ENCODE measurements at regions of chr2 and their contacts with region 1.

Region 1: GRCh38 chr2:102473020-102473419 is at the start of gene SLC9A4:
- DNase-seq: peak in 1 of 3 donors; percentile 83
- ATAC-seq: peak; percentile 79
- H3K4me3 ChIP-seq: no peak within 1 kb of the TSS
- H3K4me1 ChIP-seq: no peaks in the 10 kb centered on the region
- CTCF ChIP-seq: peak; percentile 78
- total RNA-seq, gene SLC9A4: 0.17 to 0.32 TPM in 2 of 3 donors, not detected in the other

Region 2: GRCh38 chr2:102592597-102592996 is 119.6 kb after region 1 on chr2:
- intact Hi-C with region 1: loop called in 1 of 2 experiments (anchors 5 kb)
- DNase-seq: peak in 1 of 3 donors; percentile 91
- ATAC-seq: peak; percentile 83
- H3K4me3 ChIP-seq: no peak overlapping the region
- H3K4me1 ChIP-seq: peaks cover 24% of the 10 kb centered on the region
- CTCF ChIP-seq: peak; percentile 47

Region 3: GRCh38 chr2:102615622-102616436 is 142.8 kb after region 1 on chr2:
- intact Hi-C with region 1: loop called in 1 of 2 experiments (anchors 2 kb)
- DNase-seq: peak; percentile 64 to 74 (median 65)
- ATAC-seq: peak; percentile 52
- H3K4me3 ChIP-seq: no peak overlapping the region
- H3K4me1 ChIP-seq: peaks cover 17% of the 10 kb centered on the region
- CTCF ChIP-seq: peak; percentile 63

Region 4: GRCh38 chr2:102703748-102704147 is 230.7 kb after region 1 on chr2:
- intact Hi-C with region 1: loop called in 1 of 2 experiments (anchors 10 kb)
- DNase-seq: peak in 1 of 3 donors; percentile 68
- ATAC-seq: peak; percentile 69
- H3K4me3 ChIP-seq: no peak overlapping the region
- H3K4me1 ChIP-seq: no peaks in the 10 kb centered on the region
- CTCF ChIP-seq: no peak

Measured in mucosa of descending colon (tissue), 3 donors.